ENCODE measurements at regions of chr1 and their contacts with region 1.

Region 1: GRCh38 chr1:48055876-48056764 is 58.9 kb upstream of the TRABD2B start:
- DNase-seq: no peak
- ATAC-seq: no peak
- H3K4me3 ChIP-seq: no peak overlapping the region
- H3K27ac ChIP-seq: no peak overlapping the region
- H3K4me1 ChIP-seq: no peaks in the 10 kb centered on the region
- H3K27me3 ChIP-seq: no peaks in the 10 kb centered on the region
- CTCF ChIP-seq: no peak
- POLR2A ChIP-seq: no peak

Region 2: DNA sequence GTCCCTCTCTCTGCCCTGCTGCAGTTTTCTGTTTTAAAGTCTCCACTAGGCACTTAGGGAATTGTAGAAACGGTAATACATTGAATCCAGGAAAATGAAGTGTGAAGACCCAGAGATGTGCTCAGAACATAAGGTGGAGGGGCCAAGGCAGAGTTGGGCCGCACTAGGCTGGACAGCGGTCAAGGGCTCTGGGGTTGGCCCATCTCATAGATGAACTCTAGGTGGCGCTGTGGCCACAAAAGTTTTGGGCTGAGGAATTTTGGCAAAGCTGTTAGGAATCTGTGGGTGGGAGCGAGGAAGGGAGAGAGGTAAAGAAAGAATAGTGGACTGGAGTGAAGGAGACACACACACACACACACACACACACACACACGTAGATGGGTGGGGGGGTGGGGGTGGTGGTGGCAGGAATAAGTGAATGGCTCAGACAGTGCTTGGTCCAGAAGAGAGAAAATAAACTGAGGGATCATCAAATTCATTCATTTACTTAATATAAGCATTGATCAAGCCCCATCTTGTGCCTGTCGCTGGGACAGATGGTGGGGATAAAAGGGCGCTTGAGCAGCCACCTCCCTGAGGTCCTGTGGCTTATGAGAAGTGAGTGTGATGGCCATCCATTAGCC is 317.4 kb before region 1 on chr1:
- in situ Hi-C with region 1: loop called in 3 of 4 experiments (anchors 10 to 25 kb)
- intact Hi-C with region 1: loop called (anchors 1 kb)
- DNase-seq: peak in 1 of 2 donors; percentile 23
- ATAC-seq: peak; percentile 56 to 74
- H3K4me3 ChIP-seq: no peak overlapping the region
- H3K27ac ChIP-seq: no peak overlapping the region
- H3K4me1 ChIP-seq: no peaks in the 10 kb centered on the region
- H3K27me3 ChIP-seq: peaks cover 0 to 3% (median 0%) of the 10 kb centered on the region in 3 donors
- CTCF ChIP-seq: peak; percentile 31 to 76 (median 55)
- POLR2A ChIP-seq: no peak

Region 3: GRCh38 chr1:47893412-47893811 is 162.7 kb before region 1 on chr1:
- in situ Hi-C with region 1: no loop called
- intact Hi-C with region 1: no loop called
- DNase-seq: no peak
- ATAC-seq: no peak
- H3K4me3 ChIP-seq: no peak overlapping the region
- H3K27ac ChIP-seq: no peak overlapping the region
- H3K4me1 ChIP-seq: peaks cover 4 to 40% of the 10 kb centered on the region in 2 donors
- H3K27me3 ChIP-seq: no peaks in the 10 kb centered on the region
- CTCF ChIP-seq: no peak
- POLR2A ChIP-seq: no peak

Region 4: GRCh38 chr1:47997289-47998200 is 58.6 kb before region 1 on chr1 and contains the start of gene TRABD2B:
- in situ Hi-C with region 1: loop called (anchors 5 to 10 kb)
- intact Hi-C with region 1: loop called (anchors 1 kb)
- DNase-seq: peak; percentile 51 to 65
- ATAC-seq: peak; percentile 83 to 86
- H3K4me3 ChIP-seq: peak within 1 kb of the TSS; percentile 52 to 60 (median 57)
- H3K27ac ChIP-seq: peak within 1 kb of the TSS; percentile 41 to 63 (median 53)
- H3K4me1 ChIP-seq: peaks cover 3 to 8% of the 10 kb centered on the region in 2 donors
- H3K27me3 ChIP-seq: peaks cover 12 to 22% (median 22%) of the 10 kb centered on the region in 3 donors
- CTCF ChIP-seq: peak; percentile 81 to 98 (median 92)
- POLR2A ChIP-seq: no peak
- total RNA-seq, gene TRABD2B: 0.05 to 0.15 (median 0.12) TPM

Region 5: DNA sequence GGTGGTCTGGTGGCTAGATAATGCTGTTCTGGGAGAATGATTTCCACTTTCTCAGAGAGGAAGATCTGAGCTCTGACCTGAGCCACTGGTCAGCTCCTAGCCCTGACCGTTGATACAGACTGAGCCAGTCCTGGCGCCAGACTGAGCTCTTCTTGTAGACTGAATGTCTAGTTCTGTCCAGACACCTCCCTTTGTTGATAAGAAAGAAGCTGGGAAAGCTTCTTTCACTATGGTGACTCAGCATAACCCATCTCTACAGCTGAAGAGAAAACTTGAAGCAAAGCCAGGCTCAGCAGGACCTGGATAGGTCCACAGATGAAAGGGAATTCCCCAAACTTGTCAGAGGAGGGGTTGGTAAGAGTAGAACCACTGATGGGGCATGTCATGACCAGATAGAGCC is 49.1 kb before region 1 on chr1:
- in situ Hi-C with region 1: loop called in 1 of 4 experiments (anchors 10 kb)
- intact Hi-C with region 1: no loop called
- DNase-seq: no peak
- ATAC-seq: no peak
- H3K4me3 ChIP-seq: no peak overlapping the region
- H3K27ac ChIP-seq: no peak overlapping the region
- H3K4me1 ChIP-seq: no peaks in the 10 kb centered on the region
- H3K27me3 ChIP-seq: no peaks in the 10 kb centered on the region
- CTCF ChIP-seq: no peak
- POLR2A ChIP-seq: no peak

Measured in gastrocnemius medialis (tissue), 4 donors.